ENCODE measurements at regions of chr10 and their contacts with region 1.

Region 1: DNA sequence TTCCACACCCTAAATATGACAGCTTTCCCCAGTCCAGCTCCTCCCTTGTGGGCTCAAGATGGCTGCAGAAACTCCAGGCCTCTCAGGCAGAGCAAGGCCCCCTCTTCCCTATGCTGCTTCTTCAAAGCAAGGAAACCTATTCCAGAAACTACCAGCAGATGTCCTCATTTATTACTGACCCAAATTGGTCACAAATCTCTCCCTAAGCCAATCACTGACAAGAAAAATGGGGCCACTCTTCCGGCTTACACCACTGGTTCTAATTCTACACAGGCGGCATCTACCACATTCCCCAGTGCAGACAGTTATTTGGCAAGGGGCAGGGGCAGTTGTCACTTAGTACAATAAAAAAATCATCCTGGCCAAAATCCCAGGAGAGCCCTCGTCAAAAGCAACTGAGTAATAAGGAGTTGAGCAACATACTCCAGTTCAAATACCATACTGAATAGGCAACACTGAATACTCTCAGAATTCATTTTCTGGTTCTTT is 150.4 kb downstream of the SFMBT2 start:
- DNase-seq: peak; percentile 20
- H3K4me3 Mint-ChIP-seq: no peak overlapping the region
- H3K27ac Mint-ChIP-seq: peak overlapping the region; percentile 21
- H3K4me1 Mint-ChIP-seq: peaks cover 62% of the 10 kb centered on the region
- H3K27me3 Mint-ChIP-seq: no peaks in the 10 kb centered on the region

Region 2: GRCh38 chr10:6929148-6929830 is 331.2 kb before region 1 on chr10:
- CTCF ChIA-PET with region 1: no interaction called
- intact Hi-C with region 1: loop called (anchors 2 kb)
- DNase-seq: no peak
- H3K4me3 Mint-ChIP-seq: no peak overlapping the region
- H3K27ac Mint-ChIP-seq: no peak overlapping the region
- H3K4me1 Mint-ChIP-seq: peaks cover 40% of the 10 kb centered on the region
- H3K27me3 Mint-ChIP-seq: no peaks in the 10 kb centered on the region

Region 3: GRCh38 chr10:7102557-7103349 is 157.7 kb before region 1 on chr10:
- CTCF ChIA-PET with region 1: no interaction called
- intact Hi-C with region 1: no loop called
- DNase-seq: no peak
- H3K4me3 Mint-ChIP-seq: no peak overlapping the region
- H3K27ac Mint-ChIP-seq: no peak overlapping the region
- H3K4me1 Mint-ChIP-seq: peaks cover 6% of the 10 kb centered on the region
- H3K27me3 Mint-ChIP-seq: no peaks in the 10 kb centered on the region

Region 4: GRCh38 chr10:7159928-7160327 is 100.5 kb before region 1 on chr10:
- CTCF ChIA-PET with region 1: no interaction called
- intact Hi-C with region 1: loop called (anchors 1 kb)
- DNase-seq: peak; percentile 50
- H3K4me3 Mint-ChIP-seq: no peak overlapping the region
- H3K27ac Mint-ChIP-seq: no peak overlapping the region
- H3K4me1 Mint-ChIP-seq: peaks cover 24% of the 10 kb centered on the region
- H3K27me3 Mint-ChIP-seq: no peaks in the 10 kb centered on the region

Region 5: GRCh38 chr10:7192831-7193361 is 67.6 kb before region 1 on chr10:
- CTCF ChIA-PET with region 1: no interaction called
- intact Hi-C with region 1: loop called (anchors 1 kb)
- DNase-seq: peak; percentile 79
- H3K4me3 Mint-ChIP-seq: peak overlapping the region; percentile 56
- H3K27ac Mint-ChIP-seq: peak overlapping the region; percentile 88
- H3K4me1 Mint-ChIP-seq: peaks cover 74% of the 10 kb centered on the region
- H3K27me3 Mint-ChIP-seq: no peaks in the 10 kb centered on the region

Region 6: DNA sequence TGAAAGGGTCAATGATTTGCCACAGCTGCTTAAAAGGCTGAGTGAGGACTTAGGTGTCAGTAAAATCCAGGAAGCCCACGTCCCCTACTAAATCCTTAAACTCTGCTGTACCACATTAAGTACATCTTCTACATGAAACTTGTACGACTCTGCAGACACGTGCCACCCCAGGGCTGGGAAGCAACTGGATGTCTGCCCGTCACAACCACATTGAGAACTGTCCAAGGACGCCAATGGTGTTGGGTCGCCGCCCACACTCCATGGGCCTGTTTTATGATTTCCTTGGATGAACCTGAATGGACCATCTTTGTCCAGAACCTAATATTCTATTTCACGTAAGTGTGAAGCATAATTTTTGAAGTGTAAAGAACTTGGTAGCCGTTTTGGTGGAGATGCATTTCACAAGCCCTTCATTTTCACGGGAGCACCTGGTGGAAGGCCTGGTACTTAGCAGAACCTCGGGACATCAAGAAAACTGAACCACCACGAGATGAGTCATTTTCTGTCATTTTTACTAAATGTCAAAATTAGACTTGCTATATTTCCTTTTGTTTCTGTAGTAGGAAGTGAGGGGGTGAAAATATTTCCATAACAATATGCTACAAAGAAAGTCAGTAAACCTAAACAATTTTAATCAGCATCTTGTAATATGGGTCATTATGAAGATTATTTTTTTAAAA is 15.4 kb after region 1 on chr10:
- CTCF ChIA-PET with region 1: interaction called, 5 read pairs
- intact Hi-C with region 1: loop called (anchors 1 kb)
- DNase-seq: peak; percentile 39
- H3K4me3 Mint-ChIP-seq: no peak overlapping the region
- H3K27ac Mint-ChIP-seq: peak overlapping the region; percentile 55
- H3K4me1 Mint-ChIP-seq: peaks cover 79% of the 10 kb centered on the region
- H3K27me3 Mint-ChIP-seq: no peaks in the 10 kb centered on the region

Region 7: GRCh38 chr10:7388602-7389001 is 128.1 kb after region 1 on chr10:
- CTCF ChIA-PET with region 1: no interaction called
- intact Hi-C with region 1: loop called (anchors 2 kb)
- DNase-seq: peak; percentile 59
- H3K4me3 Mint-ChIP-seq: peak overlapping the region; percentile 36
- H3K27ac Mint-ChIP-seq: peak overlapping the region; percentile 88
- H3K4me1 Mint-ChIP-seq: peaks cover 64% of the 10 kb centered on the region
- H3K27me3 Mint-ChIP-seq: no peaks in the 10 kb centered on the region

Region 8: DNA sequence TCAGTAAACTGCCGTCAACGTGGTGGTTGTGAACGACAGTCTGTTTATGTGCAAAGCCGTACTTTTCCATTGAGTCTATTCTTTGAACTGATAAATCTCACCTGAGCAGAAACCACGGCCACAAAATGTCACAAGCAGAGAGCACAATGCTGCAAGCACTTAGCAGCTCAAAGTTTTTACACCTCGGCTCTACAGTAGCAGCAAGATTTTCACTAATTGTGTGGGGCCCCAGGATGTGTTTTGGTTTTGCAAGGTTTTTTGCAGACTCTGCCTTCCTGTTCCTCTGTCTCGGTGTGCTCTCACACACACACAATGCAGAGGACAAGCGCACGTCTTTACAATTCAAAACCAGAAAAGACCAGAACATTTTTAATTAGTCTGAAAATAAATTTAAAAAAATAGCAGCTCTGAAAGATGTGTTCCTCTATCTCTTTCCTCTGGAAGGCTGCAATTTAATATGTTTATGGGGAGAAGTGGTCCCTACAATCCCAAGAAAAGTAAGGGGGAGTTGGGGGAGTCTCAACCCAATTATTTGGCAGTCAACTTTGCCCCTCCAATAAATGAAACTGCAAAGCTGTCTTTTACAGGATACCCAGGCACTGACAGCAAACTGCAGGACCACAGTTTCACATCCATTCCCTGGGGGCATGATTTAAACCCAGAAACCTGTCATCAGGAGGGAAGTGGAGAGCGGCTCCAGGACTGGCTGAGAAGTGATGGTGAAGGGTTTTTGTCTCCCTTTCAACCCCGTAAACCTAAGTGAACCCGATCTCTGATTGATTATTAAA is 224.2 kb after region 1 on chr10:
- CTCF ChIA-PET with region 1: no interaction called
- intact Hi-C with region 1: loop called (anchors 2 kb)
- DNase-seq: peak; percentile 76
- H3K4me3 Mint-ChIP-seq: peak overlapping the region; percentile 60
- H3K27ac Mint-ChIP-seq: peak overlapping the region; percentile 71
- H3K4me1 Mint-ChIP-seq: peaks cover 76% of the 10 kb centered on the region
- H3K27me3 Mint-ChIP-seq: no peaks in the 10 kb centered on the region